ENCODE measurements at regions of chr1 and their contacts with region 1.

Region 1: GRCh38 chr1:235866913-235867845 is 473 bp upstream of the LYST start:
- DNase-seq: peak; percentile 98
- H3K4me3 Mint-ChIP-seq: peak overlapping the region; percentile 91
- H3K27ac Mint-ChIP-seq: peak overlapping the region; percentile 94
- H3K4me1 Mint-ChIP-seq: peaks cover 45% of the 10 kb centered on the region
- H3K27me3 Mint-ChIP-seq: no peaks in the 10 kb centered on the region

Region 2: GRCh38 chr1:235128456-235129328 is 738.5 kb before region 1 on chr1 and contains the start of gene TOMM20:
- CTCF ChIA-PET with region 1: no interaction called
- intact Hi-C with region 1: loop called (anchors 2 kb)
- DNase-seq: peak; percentile 98
- H3K4me3 Mint-ChIP-seq: peak within 1 kb of the TSS; percentile 96
- H3K27ac Mint-ChIP-seq: peak within 1 kb of the TSS; percentile 94
- H3K4me1 Mint-ChIP-seq: peaks cover 38% of the 10 kb centered on the region
- H3K27me3 Mint-ChIP-seq: no peaks in the 10 kb centered on the region
- total RNA-seq, gene TOMM20: 155 to 192 TPM

Region 3: DNA sequence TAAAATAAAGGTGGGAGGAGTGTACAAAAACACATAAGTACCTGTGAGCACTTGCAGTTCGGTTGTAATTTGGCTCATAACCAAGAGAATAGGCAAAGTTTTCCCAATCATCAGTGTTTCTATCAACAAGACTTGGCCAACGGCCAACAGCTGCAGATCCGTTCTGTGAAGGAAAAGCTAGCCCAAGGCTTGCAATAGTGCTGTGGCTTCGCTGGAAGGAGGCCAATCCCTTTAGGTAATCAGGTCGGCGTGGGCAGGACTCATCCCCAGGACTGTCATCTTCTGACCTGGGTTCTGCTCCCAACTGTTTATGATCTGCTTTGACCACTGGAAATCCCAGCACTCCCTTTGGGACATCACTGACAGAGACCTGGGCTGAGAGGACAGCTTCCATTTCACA is 108.2 kb before region 1 on chr1:
- CTCF ChIA-PET with region 1: no interaction called
- intact Hi-C with region 1: no loop called
- DNase-seq: no peak
- H3K4me3 Mint-ChIP-seq: no peak overlapping the region
- H3K27ac Mint-ChIP-seq: no peak overlapping the region
- H3K4me1 Mint-ChIP-seq: no peaks in the 10 kb centered on the region
- H3K27me3 Mint-ChIP-seq: no peaks in the 10 kb centered on the region

Region 4: DNA sequence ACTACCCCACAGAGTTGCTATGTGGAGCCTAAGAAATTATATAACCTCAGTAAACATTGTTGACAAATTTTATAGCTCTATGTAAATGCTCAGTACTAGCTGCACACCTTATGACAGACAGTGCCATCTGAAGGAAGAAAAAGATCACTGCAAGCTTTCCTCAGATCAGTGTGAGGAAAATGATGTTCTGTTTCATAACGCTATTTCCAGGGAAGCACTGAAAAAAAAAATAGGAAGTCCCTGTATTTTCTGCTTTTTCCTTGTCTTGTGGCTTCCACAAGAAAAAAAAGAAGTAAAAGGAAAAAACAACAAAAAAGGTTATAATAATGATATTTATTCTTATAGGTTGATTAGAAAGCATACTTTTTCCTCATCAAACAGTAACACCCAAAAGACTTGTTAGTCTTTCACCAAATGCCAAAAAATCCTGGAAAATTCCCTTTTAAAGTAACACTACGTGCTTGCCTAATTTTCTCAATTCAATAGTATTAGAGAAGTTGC is 23.7 kb before region 1 on chr1:
- CTCF ChIA-PET with region 1: interaction called, 12 read pairs
- intact Hi-C with region 1: no loop called
- DNase-seq: no peak
- H3K4me3 Mint-ChIP-seq: no peak overlapping the region
- H3K27ac Mint-ChIP-seq: no peak overlapping the region
- H3K4me1 Mint-ChIP-seq: peaks cover 48% of the 10 kb centered on the region
- H3K27me3 Mint-ChIP-seq: no peaks in the 10 kb centered on the region

Region 5: GRCh38 chr1:235917267-235917811 is 50.2 kb after region 1 on chr1:
- CTCF ChIA-PET with region 1: interaction called, 3 read pairs
- intact Hi-C with region 1: loop called (anchors 1 kb)
- DNase-seq: peak; percentile 88
- H3K4me3 Mint-ChIP-seq: no peak overlapping the region
- H3K27ac Mint-ChIP-seq: peak overlapping the region; percentile 82
- H3K4me1 Mint-ChIP-seq: peaks cover 29% of the 10 kb centered on the region
- H3K27me3 Mint-ChIP-seq: no peaks in the 10 kb centered on the region

Region 6: GRCh38 chr1:235999259-235999925 is 132.2 kb after region 1 on chr1:
- CTCF ChIA-PET with region 1: interaction called, 3 read pairs
- intact Hi-C with region 1: loop called (anchors 1 kb)
- DNase-seq: peak; percentile 80
- H3K4me3 Mint-ChIP-seq: peak overlapping the region; percentile 11
- H3K27ac Mint-ChIP-seq: peak overlapping the region; percentile 88
- H3K4me1 Mint-ChIP-seq: peaks cover 47% of the 10 kb centered on the region
- H3K27me3 Mint-ChIP-seq: no peaks in the 10 kb centered on the region

Region 7: DNA sequence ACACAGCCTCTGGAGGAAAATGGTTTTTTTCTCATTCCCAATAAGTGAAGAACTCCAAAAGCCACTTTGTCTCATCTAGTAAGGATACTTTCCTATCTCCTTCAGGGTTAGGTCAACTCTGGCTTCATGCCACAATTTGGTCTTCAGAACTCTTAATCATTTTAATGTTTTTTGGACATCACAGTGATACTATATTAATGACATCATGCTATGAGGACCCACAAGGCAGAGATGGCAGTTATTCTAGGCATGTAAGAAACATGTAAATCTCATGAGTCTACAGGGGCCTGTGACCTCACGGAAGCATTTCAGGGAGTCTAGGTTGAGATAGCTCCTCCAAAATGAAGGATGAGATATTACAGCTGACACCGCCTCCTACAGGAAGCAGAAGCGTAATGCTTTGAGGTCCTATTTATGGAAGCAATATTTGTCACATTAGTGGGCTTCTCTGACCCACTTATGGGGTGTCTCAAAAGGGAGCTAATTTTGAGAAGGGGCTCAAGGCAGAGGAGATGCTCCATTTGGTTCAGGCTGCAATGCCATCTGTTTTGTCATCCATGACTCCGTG is 270.2 kb after region 1 on chr1:
- CTCF ChIA-PET with region 1: no interaction called
- intact Hi-C with region 1: no loop called
- DNase-seq: no peak
- H3K4me3 Mint-ChIP-seq: no peak overlapping the region
- H3K27ac Mint-ChIP-seq: no peak overlapping the region
- H3K4me1 Mint-ChIP-seq: no peaks in the 10 kb centered on the region
- H3K27me3 Mint-ChIP-seq: peaks cover 58% of the 10 kb centered on the region

Region 8: DNA sequence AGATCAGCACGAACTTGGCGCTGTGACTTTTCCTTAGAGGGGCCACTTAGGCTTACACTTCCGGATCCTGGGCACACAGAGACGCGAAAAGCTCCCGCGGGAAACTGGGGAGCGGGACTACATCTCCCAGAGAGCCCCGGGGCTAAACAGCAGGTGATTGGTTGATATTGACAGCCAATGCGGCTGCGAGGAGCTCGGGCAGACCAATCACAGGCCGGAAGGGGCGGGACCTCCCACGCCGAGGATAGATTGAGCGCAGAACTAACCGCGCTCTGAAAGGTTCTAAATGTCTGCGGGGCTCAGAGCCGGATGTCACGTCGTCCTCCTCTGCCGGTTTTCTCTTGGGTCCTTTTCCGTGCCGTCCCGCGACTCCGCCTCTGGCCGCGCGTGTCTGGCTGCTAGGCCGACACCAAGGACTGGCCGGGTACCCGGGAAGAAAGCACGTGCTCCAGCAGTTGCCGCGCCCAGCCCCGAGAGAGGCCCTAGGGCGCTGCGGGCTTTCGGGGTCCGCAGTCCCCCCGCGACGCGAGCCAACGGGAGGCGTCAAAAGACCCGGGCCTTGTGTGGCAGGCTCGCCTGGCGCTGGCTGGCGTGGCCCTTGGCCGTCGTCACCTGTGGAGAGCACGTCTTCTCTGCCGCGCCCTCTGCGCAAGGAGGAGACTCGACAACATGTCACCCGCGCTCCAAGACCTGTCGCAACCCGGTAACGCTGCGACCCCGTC is 928.0 kb after region 1 on chr1 and contains the start of gene MTR:
- CTCF ChIA-PET with region 1: no interaction called
- intact Hi-C with region 1: loop called (anchors 2 kb)
- DNase-seq: peak; percentile 98
- H3K4me3 Mint-ChIP-seq: peak within 1 kb of the TSS; percentile 80
- H3K27ac Mint-ChIP-seq: peak within 1 kb of the TSS; percentile 86
- H3K4me1 Mint-ChIP-seq: peaks cover 27% of the 10 kb centered on the region
- H3K27me3 Mint-ChIP-seq: no peaks in the 10 kb centered on the region
- total RNA-seq, gene MTR: 55.3 to 57.6 TPM

Measured in activated naive CD4-positive, alpha-beta T cell treated with anti-CD3 and anti-CD28 coated beads for 36 hours (primary cell).